ENCODE measurements at regions of chr7 and their contacts with region 1.

Region 1: DNA sequence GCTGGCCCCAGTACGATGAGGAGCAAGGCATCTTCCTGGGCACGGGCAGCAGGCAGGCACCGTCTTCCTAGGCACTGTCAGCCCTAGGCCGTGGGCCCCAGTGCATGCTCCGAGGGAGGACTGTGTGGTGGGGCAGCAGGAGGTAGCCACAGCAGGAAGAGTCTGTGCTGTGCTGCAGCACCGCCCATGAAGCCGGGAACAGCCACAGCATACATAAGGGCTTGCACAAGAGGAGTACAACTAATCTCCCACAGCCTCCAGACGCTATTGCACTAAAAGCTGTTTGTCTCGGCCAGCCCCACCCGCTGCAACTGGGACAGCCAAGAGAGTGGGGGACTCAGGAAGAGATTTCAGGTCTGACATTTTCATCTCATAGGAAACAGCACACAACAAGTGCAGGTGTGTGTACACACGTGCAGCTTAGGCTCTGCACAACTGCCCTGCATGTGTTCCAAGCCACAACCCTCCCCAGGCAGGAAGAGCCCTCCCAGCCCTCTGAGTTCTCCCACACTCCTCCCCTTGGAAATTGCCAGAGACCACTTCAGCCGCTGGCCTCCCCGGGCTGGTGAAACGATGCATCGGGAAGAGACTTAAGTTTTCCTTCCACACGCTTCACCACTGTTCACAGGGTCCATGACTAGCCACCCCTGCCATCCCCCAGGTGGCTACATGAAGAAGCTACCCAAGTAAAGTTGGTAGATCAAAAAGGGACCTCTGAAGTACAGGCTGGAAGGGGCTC is 88.1 kb upstream of the DDC start:
- DNase-seq: no peak
- ATAC-seq: peak; percentile 53 to 81 (median 70)
- H3K4me3 ChIP-seq: peak overlapping the region in 1 of 10 donors; percentile 27
- H3K27ac ChIP-seq: peak overlapping the region; percentile 65 to 94 (median 72)
- H3K4me1 ChIP-seq: peaks cover 50 to 89% (median 72%) of the 10 kb centered on the region in 9 donors
- H3K27me3 ChIP-seq: no peaks in the 10 kb centered on the region
- CTCF ChIP-seq: no peak

Region 2: GRCh38 chr7:50620433-50620832 is 32.9 kb before region 1 on chr7:
- intact Hi-C with region 1: loop called in 1 of 10 experiments (anchors 2 kb)
- DNase-seq: no peak
- ATAC-seq: no peak
- H3K4me3 ChIP-seq: no peak overlapping the region
- H3K27ac ChIP-seq: peak overlapping the region in 3 of 10 donors; percentile 1 to 78 (median 16)
- H3K4me1 ChIP-seq: peaks cover 0 to 45% (median 24%) of the 10 kb centered on the region in 9 donors
- H3K27me3 ChIP-seq: no peaks in the 10 kb centered on the region
- CTCF ChIP-seq: no peak

Measured in heart right ventricle (tissue), 16 donors.